GM10248 (cell line): ENCODE measurements at regions of chr5 and their contacts with region 1.

Region 1: GRCh38 chr5:132829742-132830435 is 558 bp downstream of the SHROOM1 start:
- DNase-seq: peak; percentile 90
- CTCF ChIP-seq: peak; percentile 92

Region 2: GRCh38 chr5:132813599-132814502 is 16.0 kb before region 1 on chr5:
- CTCF ChIA-PET with region 1: interaction called, 98 read pairs
- POLR2A ChIA-PET with region 1: no interaction called
- DNase-seq: peak; percentile 59
- CTCF ChIP-seq: no peak

Region 3: DNA sequence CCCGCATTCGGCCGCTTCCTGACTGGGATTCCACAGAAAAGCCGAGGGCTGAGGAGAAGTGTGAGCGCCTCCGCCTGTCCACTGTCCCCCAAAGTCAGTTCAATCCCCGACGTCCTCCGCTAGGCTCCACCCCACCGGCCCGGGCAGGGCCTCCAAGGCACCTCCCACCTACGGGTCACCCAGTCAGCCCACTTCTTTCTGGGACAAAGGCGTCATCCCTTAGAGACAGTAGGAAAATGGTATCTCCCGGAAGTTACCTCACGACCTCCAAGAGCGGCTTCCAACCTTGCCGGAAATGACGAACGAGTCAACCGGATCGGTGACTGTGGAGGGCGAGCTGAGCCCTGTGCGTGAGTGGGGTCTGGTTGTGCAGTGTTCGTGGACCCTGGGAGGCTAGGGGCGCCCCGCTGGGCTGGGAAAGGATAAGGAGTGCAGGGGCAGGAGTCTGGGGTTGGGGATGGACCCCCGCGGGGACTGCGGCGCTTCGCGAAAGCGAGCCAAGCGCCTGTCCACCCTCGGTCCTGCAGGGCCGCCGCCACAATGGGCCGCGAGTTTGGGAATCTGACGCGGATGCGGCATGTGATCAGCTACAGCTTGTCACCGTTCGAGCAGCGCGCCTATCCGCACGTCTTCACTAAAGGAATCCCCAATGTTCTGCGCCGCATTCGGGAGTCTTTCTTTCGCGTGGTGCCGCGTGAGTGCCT is 36.6 kb after region 1 on chr5 and contains the starts of genes GDF9 and UQCRQ:
- CTCF ChIA-PET with region 1: interaction called, 215 read pairs
- POLR2A ChIA-PET with region 1: no interaction called
- DNase-seq: peak; percentile 98
- CTCF ChIP-seq: no peak

Region 4: GRCh38 chr5:132883261-132883834 is 53.5 kb after region 1 on chr5:
- CTCF ChIA-PET with region 1: interaction called, 20 read pairs
- POLR2A ChIA-PET with region 1: no interaction called
- DNase-seq: peak; percentile 39
- CTCF ChIP-seq: peak; percentile 60